Activated B cell treated with CpG ODN at 0.5 μM for 24 hours (primary cell): ENCODE measurements at regions of chr1 and their contacts with region 1.

Region 1: GRCh38 chr1:64933296-64934070 is 32.9 kb downstream of the JAK1 start:
- DNase-seq: no peak
- ATAC-seq: peak; percentile 82
- H3K4me3 Mint-ChIP-seq: peak overlapping the region; percentile 33
- H3K27ac Mint-ChIP-seq: peak overlapping the region; percentile 62
- H3K4me1 Mint-ChIP-seq: peaks cover 84% of the 10 kb centered on the region
- H3K27me3 Mint-ChIP-seq: no peaks in the 10 kb centered on the region
- CTCF ChIP-seq: no peak

Region 2: GRCh38 chr1:64811131-64811530 is 122.4 kb before region 1 on chr1:
- CTCF ChIA-PET with region 1: no interaction called
- POLR2A ChIA-PET with region 1: no interaction called
- intact Hi-C with region 1: no loop called
- DNase-seq: no peak
- ATAC-seq: no peak
- H3K4me3 Mint-ChIP-seq: no peak overlapping the region
- H3K27ac Mint-ChIP-seq: no peak overlapping the region
- H3K4me1 Mint-ChIP-seq: no peaks in the 10 kb centered on the region
- H3K27me3 Mint-ChIP-seq: peaks cover 2% of the 10 kb centered on the region
- CTCF ChIP-seq: no peak

Region 3: GRCh38 chr1:64898107-64898845 is 35.2 kb before region 1 on chr1:
- CTCF ChIA-PET with region 1: no interaction called
- POLR2A ChIA-PET with region 1: no interaction called
- intact Hi-C with region 1: loop called (anchors 5 kb)
- DNase-seq: no peak
- ATAC-seq: peak; percentile 69
- H3K4me3 Mint-ChIP-seq: peak overlapping the region; percentile 42
- H3K27ac Mint-ChIP-seq: peak overlapping the region; percentile 48
- H3K4me1 Mint-ChIP-seq: peaks cover 97% of the 10 kb centered on the region
- H3K27me3 Mint-ChIP-seq: no peaks in the 10 kb centered on the region
- CTCF ChIP-seq: no peak

Region 4: DNA sequence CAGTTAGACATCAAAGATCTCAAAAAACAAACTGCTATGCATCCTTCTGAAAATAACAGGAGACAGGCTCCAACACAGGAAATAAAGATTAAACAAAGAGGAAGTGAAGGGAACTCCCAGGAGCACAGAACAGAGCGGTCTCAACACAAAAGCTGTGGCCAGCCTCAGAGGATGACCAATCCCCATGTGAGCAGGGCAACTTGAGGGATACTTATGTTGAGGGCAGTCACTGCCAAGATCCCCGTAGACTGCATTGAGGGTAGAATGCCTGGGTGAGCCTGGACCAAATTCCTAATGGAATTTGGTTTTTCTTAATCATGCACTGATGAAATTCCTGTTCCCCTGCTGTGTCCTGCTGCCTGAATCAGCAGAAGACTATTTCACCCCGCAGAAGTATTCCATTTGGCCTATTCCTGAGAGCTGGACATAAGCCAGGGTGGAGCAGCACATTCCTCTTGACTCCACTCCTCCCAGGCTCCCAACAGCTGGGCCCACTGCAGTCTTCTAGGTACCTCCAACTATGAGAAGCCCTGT is 16.1 kb before region 1 on chr1:
- CTCF ChIA-PET with region 1: no interaction called
- POLR2A ChIA-PET with region 1: interaction called, 3 read pairs
- intact Hi-C with region 1: loop called (anchors 2 kb)
- DNase-seq: no peak
- ATAC-seq: peak; percentile 14
- H3K4me3 Mint-ChIP-seq: peak overlapping the region; percentile 63
- H3K27ac Mint-ChIP-seq: peak overlapping the region; percentile 80
- H3K4me1 Mint-ChIP-seq: peaks cover 93% of the 10 kb centered on the region
- H3K27me3 Mint-ChIP-seq: no peaks in the 10 kb centered on the region
- CTCF ChIP-seq: no peak

Region 5: GRCh38 chr1:64923294-64923721 is 10.2 kb before region 1 on chr1:
- CTCF ChIA-PET with region 1: no interaction called
- POLR2A ChIA-PET with region 1: interaction called, 3 read pairs
- intact Hi-C with region 1: loop called (anchors 1 kb)
- DNase-seq: no peak
- ATAC-seq: no peak
- H3K4me3 Mint-ChIP-seq: peak overlapping the region; percentile 11
- H3K27ac Mint-ChIP-seq: peak overlapping the region; percentile 13
- H3K4me1 Mint-ChIP-seq: peaks cover 96% of the 10 kb centered on the region
- H3K27me3 Mint-ChIP-seq: no peaks in the 10 kb centered on the region
- CTCF ChIP-seq: no peak

Region 6: GRCh38 chr1:64948905-64949833 is 15.7 kb after region 1 on chr1:
- CTCF ChIA-PET with region 1: interaction called, 3 read pairs
- POLR2A ChIA-PET with region 1: interaction called, 4 read pairs
- intact Hi-C with region 1: loop called (anchors 2 kb)
- DNase-seq: no peak
- ATAC-seq: peak; percentile 56
- H3K4me3 Mint-ChIP-seq: peak overlapping the region; percentile 54
- H3K27ac Mint-ChIP-seq: peak overlapping the region; percentile 90
- H3K4me1 Mint-ChIP-seq: peaks cover 86% of the 10 kb centered on the region
- H3K27me3 Mint-ChIP-seq: no peaks in the 10 kb centered on the region
- CTCF ChIP-seq: no peak

Region 7: GRCh38 chr1:64956733-64957441 is 23.4 kb after region 1 on chr1:
- CTCF ChIA-PET with region 1: no interaction called
- POLR2A ChIA-PET with region 1: interaction called, 3 read pairs
- intact Hi-C with region 1: loop called (anchors 2 kb)
- DNase-seq: no peak
- ATAC-seq: peak; percentile 83
- H3K4me3 Mint-ChIP-seq: no peak overlapping the region
- H3K27ac Mint-ChIP-seq: no peak overlapping the region
- H3K4me1 Mint-ChIP-seq: peaks cover 68% of the 10 kb centered on the region
- H3K27me3 Mint-ChIP-seq: no peaks in the 10 kb centered on the region
- CTCF ChIP-seq: no peak